Endothelial cell of umbilical vein (primary cell): ENCODE measurements at regions of chr18 and their contacts with region 1.

Region 1: DNA sequence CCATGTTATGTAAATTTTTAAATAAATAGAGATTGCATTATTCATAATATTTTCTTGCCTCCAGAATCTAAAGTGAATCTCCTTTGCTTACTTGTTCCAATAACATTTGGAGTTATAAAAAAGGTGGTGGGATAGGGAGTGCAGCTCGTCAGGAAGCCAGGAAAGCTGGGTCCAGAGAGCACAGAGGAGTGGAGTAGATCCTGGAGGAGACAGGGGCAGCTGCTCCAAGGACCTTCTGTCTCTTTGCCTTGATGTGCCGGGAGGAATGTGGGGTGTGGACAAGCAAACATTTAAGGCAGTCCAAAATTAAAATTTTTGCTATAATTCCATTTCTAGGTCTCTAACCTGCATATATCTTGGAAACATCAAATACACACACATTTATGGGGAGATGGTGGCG is 29.3 kb downstream of the HAUS1 start:
- DNase-seq: no peak
- H3K4me3 ChIP-seq: no peak overlapping the region
- H3K27ac ChIP-seq: no peak overlapping the region
- H3K4me1 ChIP-seq: no peaks in the 10 kb centered on the region
- H3K27me3 ChIP-seq: no peaks in the 10 kb centered on the region
- CTCF ChIP-seq: no peak
- POLR2A ChIP-seq: no peak

Region 2: GRCh38 chr18:46067431-46068007 is 66.0 kb before region 1 on chr18:
- CTCF ChIA-PET with region 1: no interaction called
- POLR2A ChIA-PET with region 1: no interaction called
- dilution Hi-C with region 1: no loop called
- intact Hi-C with region 1: loop called (anchors 10 kb)
- DNase-seq: peak; percentile 24
- H3K4me3 ChIP-seq: no peak overlapping the region
- H3K27ac ChIP-seq: no peak overlapping the region
- H3K4me1 ChIP-seq: peaks cover 9% of the 10 kb centered on the region
- H3K27me3 ChIP-seq: no peaks in the 10 kb centered on the region
- CTCF ChIP-seq: no peak
- POLR2A ChIP-seq: no peak